Lower lobe of right lung (tissue), 2 donors: ENCODE measurements at regions of chr17 and their contacts with region 1.

Region 1: GRCh38 chr17:48024937-48025906 is 12.4 kb downstream of the COPZ2 start:
- DNase-seq: peak; percentile 100
- ATAC-seq: peak; percentile 94 to 96
- H3K4me3 ChIP-seq: peak overlapping the region; percentile 53
- H3K27ac ChIP-seq: peak overlapping the region; percentile 88
- H3K4me1 ChIP-seq: peaks cover 38% of the 10 kb centered on the region
- H3K27me3 ChIP-seq: peaks cover 6% of the 10 kb centered on the region
- CTCF ChIP-seq: peak; percentile 71

Region 2: GRCh38 chr17:47840740-47841603 is 184.2 kb before region 1 on chr17 and contains the start of gene SCRN2:
- intact Hi-C with region 1: no loop called
- DNase-seq: peak; percentile 94
- ATAC-seq: peak; percentile 95 to 97
- H3K4me3 ChIP-seq: peak within 1 kb of the TSS; percentile 99
- H3K27ac ChIP-seq: peak within 1 kb of the TSS; percentile 75
- H3K4me1 ChIP-seq: peaks cover 65% of the 10 kb centered on the region
- H3K27me3 ChIP-seq: peaks cover 20% of the 10 kb centered on the region
- CTCF ChIP-seq: peak; percentile 97
- total RNA-seq, gene SCRN2: 30.9 TPM

Region 3: GRCh38 chr17:48074315-48075081 is 49.3 kb after region 1 on chr17:
- intact Hi-C with region 1: loop called (anchors 5 kb)
- DNase-seq: peak; percentile 65
- ATAC-seq: peak; percentile 86 to 90
- H3K4me3 ChIP-seq: no peak overlapping the region
- H3K27ac ChIP-seq: no peak overlapping the region
- H3K4me1 ChIP-seq: no peaks in the 10 kb centered on the region
- H3K27me3 ChIP-seq: no peaks in the 10 kb centered on the region
- CTCF ChIP-seq: peak; percentile 79